Aorta (tissue), 5 donors: ENCODE measurements at regions of chr19 and their contacts with region 1.

Region 1: GRCh38 chr19:8412783-8413628 is at the start of gene MARCHF2:
- DNase-seq: peak; percentile 98
- ATAC-seq: peak; percentile 100
- H3K4me3 ChIP-seq: peak within 1 kb of the TSS; percentile 85 to 90
- H3K27ac ChIP-seq: peak within 1 kb of the TSS in 1 of 2 donors; percentile 42
- H3K4me1 ChIP-seq: no peaks in the 10 kb centered on the region
- H3K27me3 ChIP-seq: no peaks in the 10 kb centered on the region
- total RNA-seq, gene MARCHF2: 61.8 to 70.5 TPM

Region 2: GRCh38 chr19:8444645-8445487 is 31.9 kb after region 1 on chr19 and contains the start of gene HNRNPM:
- intact Hi-C with region 1: loop called in 1 of 2 experiments (anchors 5 kb)
- DNase-seq: peak; percentile 100
- ATAC-seq: peak; percentile 99
- H3K4me3 ChIP-seq: peak within 1 kb of the TSS; percentile 65 to 95
- H3K27ac ChIP-seq: peak within 1 kb of the TSS; percentile 81
- H3K4me1 ChIP-seq: peaks cover 0 to 3% of the 10 kb centered on the region in 2 donors
- H3K27me3 ChIP-seq: no peaks in the 10 kb centered on the region
- total RNA-seq, gene HNRNPM: 134 to 148 TPM

Region 3: DNA sequence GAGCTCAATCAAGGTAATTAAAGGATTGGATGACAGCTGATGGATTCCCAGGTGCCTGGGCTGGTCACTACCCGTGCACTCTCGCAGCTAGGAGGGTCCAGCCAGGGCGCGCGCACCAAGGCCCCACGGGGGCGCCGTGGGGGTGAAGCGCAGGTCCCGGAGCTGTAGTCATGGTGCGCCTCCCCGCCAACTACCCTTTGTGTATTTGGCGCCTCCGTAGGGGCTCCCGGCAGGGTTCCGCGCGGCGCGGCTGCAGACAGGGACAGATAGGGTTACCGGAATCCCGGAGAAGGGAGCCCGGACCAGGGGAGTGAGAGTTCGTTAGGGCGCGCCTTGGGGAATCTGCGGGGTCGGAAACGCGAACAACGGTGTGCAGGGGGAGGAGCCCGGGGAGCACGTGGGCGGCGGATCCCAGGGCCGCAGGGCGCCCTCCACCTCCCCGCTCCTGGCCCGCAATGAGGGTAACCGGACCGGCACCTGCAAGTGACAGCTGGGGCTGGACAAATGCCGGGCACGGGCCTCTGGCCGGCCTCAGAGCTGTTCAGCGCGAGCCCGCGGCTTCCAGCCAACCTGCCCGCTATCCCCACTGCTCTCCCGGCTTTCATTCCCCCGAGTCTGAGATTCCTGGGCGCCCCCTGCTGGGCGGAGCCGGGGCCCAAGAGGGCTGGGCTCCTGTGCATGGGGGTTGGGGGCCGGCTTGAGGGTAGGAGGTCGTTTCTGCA is 92.8 kb after region 1 on chr19:
- intact Hi-C with region 1: loop called (anchors 5 kb)
- DNase-seq: peak; percentile 84 to 93
- ATAC-seq: peak; percentile 90
- H3K4me3 ChIP-seq: peak overlapping the region; percentile 22 to 48
- H3K27ac ChIP-seq: no peak overlapping the region
- H3K4me1 ChIP-seq: no peaks in the 10 kb centered on the region
- H3K27me3 ChIP-seq: no peaks in the 10 kb centered on the region